ENCODE measurements at regions of chr1 and their contacts with region 1.

Region 1: GRCh38 chr1:211632631-211633523 is 42.5 kb downstream of the NEK2 start:
- DNase-seq: no peak
- ATAC-seq: peak in 1 of 2 experiments; percentile 19; a peak in 4 of 6 replicates
- H3K4me3 ChIP-seq: no peak overlapping the region
- H3K27ac ChIP-seq: peak overlapping the region in 1 of 2 experiments; percentile 57; a peak in 3 of 6 replicates
- H3K4me1 ChIP-seq: peaks cover 30% of the 10 kb centered on the region
- CTCF ChIP-seq: no peak
- EP300 ChIP-seq: no peak
- POLR2A ChIP-seq: no peak
- RAD21 ChIP-seq: no peak

Region 2: GRCh38 chr1:211616232-211616979 is 16.5 kb before region 1 on chr1:
- CTCF ChIA-PET with region 1: interaction called, 28 read pairs
- POLR2A ChIA-PET with region 1: no interaction called
- DNase-seq: no peak
- ATAC-seq: no peak
- H3K4me3 ChIP-seq: no peak overlapping the region
- H3K27ac ChIP-seq: 0 out of 6 replicates have a peak overlapping the region, but pooled peaks of 1 of the 2 experiments have one; percentile 29
- H3K4me1 ChIP-seq: peaks cover 19% of the 10 kb centered on the region
- CTCF ChIP-seq: no peak
- EP300 ChIP-seq: no peak
- POLR2A ChIP-seq: no peak
- RAD21 ChIP-seq: no peak

Region 3: GRCh38 chr1:211648980-211649934 is 16.4 kb after region 1 on chr1:
- CTCF ChIA-PET with region 1: interaction called, 21 read pairs
- POLR2A ChIA-PET with region 1: no interaction called
- DNase-seq: peak; percentile 55 to 68
- ATAC-seq: peak; percentile 65 to 88; a peak in 4 of 6 replicates
- H3K4me3 ChIP-seq: no peak overlapping the region
- H3K27ac ChIP-seq: peak overlapping the region; percentile 54 to 81
- H3K4me1 ChIP-seq: peaks cover 71% of the 10 kb centered on the region
- CTCF ChIP-seq: peak; percentile 47
- EP300 ChIP-seq: no peak
- POLR2A ChIP-seq: no peak
- RAD21 ChIP-seq: peak; percentile 48 to 61

Measured in A549 (cell line).